PC-9 (cell line): ENCODE measurements at regions of chr13 and their contacts with region 1.

Region 1: DNA sequence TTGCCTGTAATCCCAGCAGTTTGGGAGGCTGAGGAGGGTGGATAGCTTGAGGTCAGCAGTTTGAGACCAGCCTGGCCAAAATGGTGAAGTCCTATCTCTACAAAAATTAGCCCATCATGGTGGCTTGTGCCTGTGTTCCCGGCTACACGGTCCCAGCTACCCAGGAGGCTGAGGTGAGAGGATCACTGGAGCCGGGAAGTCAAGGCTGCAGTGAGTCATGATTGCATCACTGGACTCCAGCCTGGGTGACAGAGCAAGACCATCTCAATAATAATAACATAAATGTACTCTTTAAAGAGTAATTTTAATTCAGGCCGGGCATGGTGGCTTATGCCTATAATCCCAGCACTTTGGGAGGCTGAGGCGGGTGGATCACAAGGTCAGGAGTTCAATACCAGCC is 38.7 kb downstream of the SKA3 start:
- DNase-seq: no peak
- H3K4me3 ChIP-seq: no peak overlapping the region
- H3K27ac ChIP-seq: no peak overlapping the region
- H3K4me1 ChIP-seq: peaks cover 15% of the 10 kb centered on the region
- H3K27me3 ChIP-seq: no peaks in the 10 kb centered on the region
- CTCF ChIP-seq: no peak

Region 2: GRCh38 chr13:21579754-21580316 is 442.1 kb after region 1 on chr13:
- CTCF ChIA-PET with region 1: interaction called, 22 read pairs
- POLR2A ChIA-PET with region 1: no interaction called
- intact Hi-C with region 1: no loop called
- DNase-seq: no peak
- H3K4me3 ChIP-seq: no peak overlapping the region
- H3K27ac ChIP-seq: no peak overlapping the region
- H3K4me1 ChIP-seq: no peaks in the 10 kb centered on the region
- H3K27me3 ChIP-seq: no peaks in the 10 kb centered on the region
- CTCF ChIP-seq: no peak

Region 3: DNA sequence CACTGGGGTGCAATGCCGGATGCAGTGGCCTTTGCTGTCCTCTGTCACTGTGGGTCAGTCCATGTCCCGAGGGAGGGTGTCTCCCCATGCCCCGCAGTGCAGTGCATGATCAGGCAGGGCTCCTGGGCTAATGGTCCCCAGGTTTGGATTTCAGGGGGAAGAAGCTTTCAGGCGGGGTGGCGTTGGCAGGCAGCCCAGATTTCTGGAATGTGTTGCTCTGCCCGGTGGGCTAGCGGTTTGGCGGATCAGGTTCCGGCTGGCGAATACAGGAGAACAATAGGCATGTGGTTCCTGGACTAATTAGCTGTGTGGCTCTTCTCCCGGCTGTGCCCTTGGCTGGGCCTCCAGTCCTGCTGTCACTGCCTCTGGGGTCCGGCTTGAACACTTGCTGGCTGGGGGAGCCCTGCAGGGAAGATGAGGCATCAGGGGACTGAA is 674.5 kb after region 1 on chr13:
- CTCF ChIA-PET with region 1: no interaction called
- POLR2A ChIA-PET with region 1: no interaction called
- intact Hi-C with region 1: no loop called
- DNase-seq: no peak
- H3K4me3 ChIP-seq: no peak overlapping the region
- H3K27ac ChIP-seq: no peak overlapping the region
- H3K4me1 ChIP-seq: no peaks in the 10 kb centered on the region
- H3K27me3 ChIP-seq: peaks cover 70% of the 10 kb centered on the region
- CTCF ChIP-seq: no peak